ENCODE measurements at regions of chr4 and their contacts with region 1.

Region 1: DNA sequence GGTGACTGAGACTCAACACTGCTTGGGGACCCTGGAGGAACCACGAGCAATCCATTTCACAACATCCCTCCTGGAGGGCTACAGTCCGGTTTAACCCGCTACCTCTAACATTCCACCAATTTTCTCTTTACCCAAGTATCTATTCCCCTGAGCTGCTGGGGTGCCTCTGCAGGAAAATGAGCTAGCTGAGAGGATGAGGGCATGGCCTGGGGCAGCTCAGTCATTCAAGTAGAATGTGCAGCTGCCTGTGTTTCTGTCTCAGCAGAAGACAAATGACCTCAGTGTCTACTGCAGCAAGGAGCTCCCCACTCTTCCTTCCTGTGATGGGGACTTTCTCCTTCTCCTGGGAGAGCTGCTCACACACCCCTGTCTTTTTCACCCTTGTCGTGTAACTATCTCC is 120.8 kb downstream of the ZNF518B start:
- DNase-seq: peak; percentile 89
- H3K4me3 ChIP-seq: no peak overlapping the region
- H3K27ac ChIP-seq: peak overlapping the region; percentile 31
- H3K4me1 ChIP-seq: peaks cover 42% of the 10 kb centered on the region
- H3K27me3 ChIP-seq: no peaks in the 10 kb centered on the region
- CTCF ChIP-seq: no peak

Region 2: DNA sequence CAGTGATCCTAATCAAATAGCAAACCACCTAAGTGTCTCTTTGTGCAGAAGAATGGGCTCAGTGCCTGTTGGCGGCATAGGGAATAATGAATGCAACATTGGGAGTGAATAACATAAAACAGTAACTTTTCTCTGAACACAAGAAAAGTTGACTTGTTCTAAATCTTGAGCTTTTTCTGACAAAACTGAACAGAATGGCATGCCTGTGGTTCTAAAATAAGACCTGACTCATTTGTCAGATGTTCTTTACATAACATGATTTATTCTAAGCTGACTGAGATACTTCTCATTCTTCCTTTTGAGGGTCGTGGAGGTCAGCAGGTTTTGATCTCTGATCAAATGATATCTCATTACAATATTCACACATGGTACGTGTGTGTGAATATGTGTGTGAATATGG is 54.5 kb before region 1 on chr4:
- CTCF ChIA-PET with region 1: no interaction called
- dilution Hi-C with region 1: no loop called
- in situ Hi-C with region 1: no loop called
- intact Hi-C with region 1: loop called (anchors 5 kb)
- DNase-seq: peak; percentile 58
- H3K4me3 ChIP-seq: no peak overlapping the region
- H3K27ac ChIP-seq: peak overlapping the region; percentile 91
- H3K4me1 ChIP-seq: peaks cover 51% of the 10 kb centered on the region
- H3K27me3 ChIP-seq: no peaks in the 10 kb centered on the region
- CTCF ChIP-seq: no peak

Region 3: GRCh38 chr4:10296730-10297129 is 39.7 kb before region 1 on chr4:
- CTCF ChIA-PET with region 1: no interaction called
- dilution Hi-C with region 1: no loop called
- in situ Hi-C with region 1: no loop called
- intact Hi-C with region 1: loop called (anchors 5 kb)
- DNase-seq: peak; percentile 71
- H3K4me3 ChIP-seq: no peak overlapping the region
- H3K27ac ChIP-seq: no peak overlapping the region
- H3K4me1 ChIP-seq: peaks cover 18% of the 10 kb centered on the region
- H3K27me3 ChIP-seq: no peaks in the 10 kb centered on the region
- CTCF ChIP-seq: no peak

Region 4: GRCh38 chr4:10395971-10396580 is 59.6 kb after region 1 on chr4:
- CTCF ChIA-PET with region 1: no interaction called
- dilution Hi-C with region 1: no loop called
- in situ Hi-C with region 1: no loop called
- intact Hi-C with region 1: loop called (anchors 2 kb)
- DNase-seq: peak; percentile 89
- H3K4me3 ChIP-seq: no peak overlapping the region
- H3K27ac ChIP-seq: peak overlapping the region; percentile 68
- H3K4me1 ChIP-seq: peaks cover 26% of the 10 kb centered on the region
- H3K27me3 ChIP-seq: no peaks in the 10 kb centered on the region
- CTCF ChIP-seq: no peak

Region 5: GRCh38 chr4:10437735-10438134 is 101.3 kb after region 1 on chr4:
- CTCF ChIA-PET with region 1: no interaction called
- dilution Hi-C with region 1: no loop called
- in situ Hi-C with region 1: no loop called
- intact Hi-C with region 1: no loop called
- DNase-seq: no peak
- H3K4me3 ChIP-seq: no peak overlapping the region
- H3K27ac ChIP-seq: no peak overlapping the region
- H3K4me1 ChIP-seq: no peaks in the 10 kb centered on the region
- H3K27me3 ChIP-seq: no peaks in the 10 kb centered on the region
- CTCF ChIP-seq: no peak